Naive thymus-derived CD4-positive, alpha-beta T cell (primary cell): ENCODE measurements at regions of chr1 and their contacts with region 1.

Region 1: DNA sequence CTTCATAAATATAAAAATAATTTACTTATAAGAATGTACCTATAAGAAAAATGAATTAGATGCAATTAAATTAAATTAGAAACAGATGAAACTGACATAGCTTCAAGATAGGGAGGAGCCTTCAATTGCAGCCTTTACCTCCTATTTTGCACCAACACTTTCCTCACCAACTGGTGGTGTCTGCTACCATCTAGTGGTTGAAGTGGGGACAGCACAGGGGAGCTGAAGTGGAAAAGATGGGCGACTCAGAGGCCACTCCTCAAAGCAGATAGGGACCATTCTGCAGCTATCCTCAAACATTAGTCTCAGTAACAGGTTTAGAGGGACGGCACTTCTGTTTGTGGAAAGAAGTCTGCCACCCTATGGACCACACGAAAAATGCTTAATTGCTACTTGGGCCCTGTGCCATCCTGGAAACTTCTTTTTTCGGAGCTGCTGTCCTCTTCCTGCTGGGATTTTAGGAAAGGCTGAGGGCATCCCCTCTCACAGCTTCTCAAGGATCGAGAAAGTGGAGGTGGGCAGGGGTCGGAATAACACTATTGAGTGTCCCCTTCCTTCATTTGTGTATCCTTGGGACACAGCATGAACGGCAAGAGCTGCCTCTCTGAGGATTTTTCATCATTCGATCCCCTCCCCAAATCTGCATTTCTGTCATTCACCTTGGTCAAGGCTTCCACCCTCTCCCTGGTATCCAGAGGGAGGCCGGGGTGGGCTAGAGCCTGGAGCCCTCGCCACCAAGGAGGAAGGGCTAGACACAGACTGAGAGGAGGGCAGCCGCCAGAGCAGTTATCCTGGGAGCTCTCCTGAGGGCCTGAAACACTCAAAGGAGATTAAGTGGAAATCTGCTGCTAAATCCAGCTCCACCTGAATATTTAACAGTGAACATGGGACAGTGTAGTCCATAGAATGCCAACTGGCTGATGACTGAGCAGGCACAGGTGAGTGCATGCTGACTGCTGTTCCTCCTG is 9.6 kb downstream of the PROK1 start:
- DNase-seq: peak; percentile 66 to 91 (median 83)
- ATAC-seq: peak; percentile 96
- H3K4me3 ChIP-seq: no peak overlapping the region
- H3K4me3 Mint-ChIP-seq: no peak overlapping the region
- H3K27ac ChIP-seq: no peak overlapping the region
- H3K27ac Mint-ChIP-seq: no peak overlapping the region
- H3K4me1 ChIP-seq: no peaks in the 10 kb centered on the region
- H3K4me1 Mint-ChIP-seq: no peaks in the 10 kb centered on the region
- H3K27me3 ChIP-seq: no peaks in the 10 kb centered on the region
- H3K27me3 Mint-ChIP-seq: no peaks in the 10 kb centered on the region

Region 2: DNA sequence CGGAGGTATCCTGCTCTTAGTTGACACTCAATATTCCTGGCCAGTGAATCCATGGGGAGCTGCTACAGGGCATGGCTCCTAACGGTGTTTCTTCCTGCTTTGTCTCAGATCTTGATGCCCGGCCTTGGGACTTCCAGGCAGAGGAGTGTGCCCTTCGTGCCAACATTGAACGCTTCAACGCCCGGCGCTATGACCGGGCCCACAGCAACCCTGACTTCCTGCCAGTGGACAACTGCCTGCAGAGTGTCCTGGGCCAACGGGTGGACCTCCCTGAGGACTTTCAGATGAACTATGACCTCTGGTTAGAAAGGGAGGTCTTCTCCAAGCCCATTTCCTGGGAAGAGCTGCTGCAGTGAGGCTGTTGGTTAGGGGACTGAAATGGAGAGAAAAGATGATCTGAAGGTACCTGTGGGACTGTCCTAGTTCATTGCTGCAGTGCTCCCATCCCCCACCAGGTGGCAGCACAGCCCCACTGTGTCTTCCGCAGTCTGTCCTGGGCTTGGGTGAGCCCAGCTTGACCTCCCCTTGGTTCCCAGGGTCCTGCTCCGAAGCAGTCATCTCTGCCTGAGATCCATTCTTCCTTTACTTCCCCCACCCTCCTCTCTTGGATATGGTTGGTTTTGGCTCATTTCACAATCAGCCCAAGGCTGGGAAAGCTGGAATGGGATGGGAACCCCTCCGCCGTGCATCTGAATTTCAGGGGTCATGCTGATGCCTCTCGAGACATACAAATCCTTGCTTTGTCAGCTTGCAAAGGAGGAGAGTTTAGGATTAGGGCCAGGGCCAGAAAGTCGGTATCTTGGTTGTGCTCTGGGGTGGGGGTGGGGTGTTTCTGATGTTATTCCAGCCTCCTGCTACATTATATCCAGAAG is 406.7 kb before region 1 on chr1:
- CTCF ChIA-PET with region 1: interaction called, 10 read pairs
- POLR2A ChIA-PET with region 1: no interaction called
- intact Hi-C with region 1: loop called in 1 of 2 experiments (anchors 1 kb)
- DNase-seq: peak; percentile 24 to 76 (median 58)
- ATAC-seq: peak; percentile 87
- H3K4me3 ChIP-seq: no peak overlapping the region
- H3K4me3 Mint-ChIP-seq: no peak overlapping the region
- H3K27ac ChIP-seq: no peak overlapping the region
- H3K27ac Mint-ChIP-seq: peak overlapping the region in 1 of 9 donors; percentile 43
- H3K4me1 ChIP-seq: no peaks in the 10 kb centered on the region
- H3K4me1 Mint-ChIP-seq: peaks cover 0 to 11% (median under 1%) of the 10 kb centered on the region in 7 donors
- H3K27me3 ChIP-seq: no peaks in the 10 kb centered on the region
- H3K27me3 Mint-ChIP-seq: no peaks in the 10 kb centered on the region

Region 3: GRCh38 chr1:110203021-110203661 is 257.4 kb before region 1 on chr1:
- CTCF ChIA-PET with region 1: interaction called, 68 read pairs
- POLR2A ChIA-PET with region 1: interaction called, 8 read pairs
- intact Hi-C with region 1: loop called (anchors 1 kb)
- DNase-seq: peak; percentile 31 to 83 (median 74)
- ATAC-seq: peak; percentile 71
- H3K4me3 ChIP-seq: no peak overlapping the region
- H3K4me3 Mint-ChIP-seq: peak overlapping the region in 5 of 10 donors; percentile 1 to 26 (median 18)
- H3K27ac ChIP-seq: no peak overlapping the region
- H3K27ac Mint-ChIP-seq: peak overlapping the region; percentile 53 to 92 (median 87)
- H3K4me1 ChIP-seq: peaks cover 8 to 20% of the 10 kb centered on the region in 2 donors
- H3K4me1 Mint-ChIP-seq: peaks cover 13 to 32% (median 23%) of the 10 kb centered on the region in 7 donors
- H3K27me3 ChIP-seq: no peaks in the 10 kb centered on the region
- H3K27me3 Mint-ChIP-seq: no peaks in the 10 kb centered on the region

Region 4: GRCh38 chr1:110407260-110408210 is 53.0 kb before region 1 on chr1 and contains the start of gene LAMTOR5:
- CTCF ChIA-PET with region 1: interaction called, 20 read pairs
- POLR2A ChIA-PET with region 1: interaction called, 3 read pairs
- intact Hi-C with region 1: loop called (anchors 1 kb)
- DNase-seq: peak; percentile 77 to 91 (median 89)
- ATAC-seq: peak; percentile 98
- H3K4me3 ChIP-seq: peak within 1 kb of the TSS; percentile 95
- H3K4me3 Mint-ChIP-seq: peak within 1 kb of the TSS; percentile 88 to 100 (median 99)
- H3K27ac ChIP-seq: peak within 1 kb of the TSS; percentile 92
- H3K27ac Mint-ChIP-seq: peak within 1 kb of the TSS; percentile 96 to 100 (median 99)
- H3K4me1 ChIP-seq: peaks cover 19% of the 10 kb centered on the region in 2 donors
- H3K4me1 Mint-ChIP-seq: peaks cover 9 to 39% (median 27%) of the 10 kb centered on the region in 7 donors
- H3K27me3 ChIP-seq: no peaks in the 10 kb centered on the region
- H3K27me3 Mint-ChIP-seq: no peaks in the 10 kb centered on the region
- total RNA-seq, gene LAMTOR5: 63.3 to 146 (median 69.4) TPM

Region 5: GRCh38 chr1:110495926-110496600 is 35.5 kb after region 1 on chr1:
- CTCF ChIA-PET with region 1: interaction called, 11 read pairs
- POLR2A ChIA-PET with region 1: no interaction called
- intact Hi-C with region 1: no loop called
- DNase-seq: peak; percentile 48 to 76 (median 64)
- ATAC-seq: peak; percentile 88
- H3K4me3 ChIP-seq: no peak overlapping the region
- H3K4me3 Mint-ChIP-seq: no peak overlapping the region
- H3K27ac ChIP-seq: no peak overlapping the region
- H3K27ac Mint-ChIP-seq: no peak overlapping the region
- H3K4me1 ChIP-seq: no peaks in the 10 kb centered on the region
- H3K4me1 Mint-ChIP-seq: peaks cover 0 to 6% (median 0%) of the 10 kb centered on the region in 7 donors
- H3K27me3 ChIP-seq: no peaks in the 10 kb centered on the region
- H3K27me3 Mint-ChIP-seq: no peaks in the 10 kb centered on the region